ENCODE measurements at regions of chr7 and their contacts with region 1.

Region 1: GRCh38 chr7:153443032-153443701 is 609.0 kb upstream of the DPP6 start:
- DNase-seq: peak in 1 of 2 donors; percentile 58
- H3K4me3 ChIP-seq: no peak overlapping the region
- H3K27ac ChIP-seq: peak overlapping the region; percentile 84 to 88
- H3K4me1 ChIP-seq: peaks cover 0 to 15% of the 10 kb centered on the region in 2 donors
- H3K27me3 ChIP-seq: no peaks in the 10 kb centered on the region
- CTCF ChIP-seq: no peak
- POLR2A ChIP-seq: no peak

Region 2: GRCh38 chr7:153331427-153331826 is 111.7 kb before region 1 on chr7:
- intact Hi-C with region 1: no loop called
- DNase-seq: no peak
- H3K4me3 ChIP-seq: no peak overlapping the region
- H3K27ac ChIP-seq: no peak overlapping the region
- H3K4me1 ChIP-seq: no peaks in the 10 kb centered on the region
- H3K27me3 ChIP-seq: no peaks in the 10 kb centered on the region
- CTCF ChIP-seq: no peak
- POLR2A ChIP-seq: no peak

Region 3: DNA sequence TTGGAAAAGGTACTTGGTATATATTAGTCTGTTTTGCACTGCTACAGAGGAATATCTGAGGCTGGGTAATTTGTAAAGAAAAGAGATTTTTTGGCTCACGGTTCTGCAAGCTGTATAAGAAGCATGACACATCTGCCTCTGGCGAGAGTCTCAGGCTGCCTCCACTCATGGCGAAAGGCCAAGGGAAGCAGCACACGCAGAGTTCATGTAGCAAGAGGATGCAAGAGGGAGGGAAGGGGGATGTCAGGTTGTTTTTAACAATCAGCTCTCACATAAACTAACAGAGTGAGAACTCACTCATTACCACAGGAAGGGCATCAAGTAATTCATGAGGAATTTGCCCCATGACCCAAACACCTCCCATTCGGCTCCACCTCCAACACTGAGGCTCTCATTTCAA is 124.3 kb after region 1 on chr7:
- intact Hi-C with region 1: loop called (anchors 10 kb)
- DNase-seq: peak; percentile 78 to 93
- H3K4me3 ChIP-seq: no peak overlapping the region
- H3K27ac ChIP-seq: peak overlapping the region; percentile 81 to 86
- H3K4me1 ChIP-seq: peaks cover 0 to 6% of the 10 kb centered on the region in 2 donors
- H3K27me3 ChIP-seq: no peaks in the 10 kb centered on the region
- CTCF ChIP-seq: no peak
- POLR2A ChIP-seq: no peak

Region 4: GRCh38 chr7:153641199-153641598 is 198.0 kb after region 1 on chr7:
- intact Hi-C with region 1: no loop called
- DNase-seq: peak; percentile 70 to 82
- H3K4me3 ChIP-seq: no peak overlapping the region
- H3K27ac ChIP-seq: peak overlapping the region; percentile 70 to 76
- H3K4me1 ChIP-seq: no peaks in the 10 kb centered on the region
- H3K27me3 ChIP-seq: no peaks in the 10 kb centered on the region
- CTCF ChIP-seq: no peak
- POLR2A ChIP-seq: no peak